CD4-positive, alpha-beta T cell (primary cell): ENCODE measurements at regions of chr6 and their contacts with region 1.

Region 1: DNA sequence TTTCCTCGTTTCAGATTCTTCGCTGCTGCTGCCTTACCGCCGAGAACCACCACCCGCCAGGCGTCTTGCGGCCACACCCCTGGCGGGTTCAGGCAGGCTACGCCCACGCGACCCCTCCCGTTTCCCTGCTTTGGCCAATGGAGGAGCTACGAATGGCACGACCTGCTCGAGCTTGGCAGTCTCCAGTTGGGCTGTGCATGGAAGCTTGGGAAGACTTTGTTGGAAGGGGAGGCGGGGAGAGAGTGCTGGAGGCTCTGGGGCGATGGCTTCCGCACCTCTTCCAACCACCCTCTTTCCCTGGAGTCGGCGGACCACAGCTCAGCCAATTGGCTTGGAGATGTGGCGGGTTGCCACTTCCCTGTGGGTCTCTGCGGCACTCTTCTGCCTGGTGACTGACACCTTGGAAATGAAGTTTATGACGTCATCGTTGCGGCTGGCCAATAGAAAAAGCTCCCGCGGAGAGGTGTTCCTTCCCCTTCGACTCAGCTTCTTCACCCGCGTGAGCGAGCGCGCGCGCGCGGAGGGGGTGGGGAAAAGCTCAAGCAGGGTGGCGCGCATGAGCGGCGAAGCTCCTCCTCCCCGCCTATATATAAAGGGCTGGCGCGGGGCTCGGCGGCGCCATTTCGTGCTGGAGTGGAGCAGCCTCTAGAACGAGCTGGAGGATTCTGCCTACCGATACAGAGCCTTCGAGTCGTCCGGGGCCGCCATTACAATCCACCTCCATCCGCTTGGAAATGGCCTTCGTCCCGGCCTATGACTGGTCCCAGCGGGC is 3.4 kb downstream of the BRD2 start:
- DNase-seq: peak; percentile 99 to 100 (median 100)
- ATAC-seq: peak; percentile 53
- H3K4me3 ChIP-seq: peak overlapping the region; percentile 97
- H3K4me3 Mint-ChIP-seq: peak overlapping the region; percentile 98
- H3K27ac ChIP-seq: peak overlapping the region; percentile 91 to 98
- H3K27ac Mint-ChIP-seq: peak overlapping the region; percentile 100
- H3K4me1 ChIP-seq: peaks cover 52% of the 10 kb centered on the region
- H3K4me1 Mint-ChIP-seq: peaks cover 48% of the 10 kb centered on the region
- H3K27me3 ChIP-seq: no peaks in the 10 kb centered on the region
- H3K27me3 Mint-ChIP-seq: no peaks in the 10 kb centered on the region
- CTCF ChIP-seq: no peak

Region 2: DNA sequence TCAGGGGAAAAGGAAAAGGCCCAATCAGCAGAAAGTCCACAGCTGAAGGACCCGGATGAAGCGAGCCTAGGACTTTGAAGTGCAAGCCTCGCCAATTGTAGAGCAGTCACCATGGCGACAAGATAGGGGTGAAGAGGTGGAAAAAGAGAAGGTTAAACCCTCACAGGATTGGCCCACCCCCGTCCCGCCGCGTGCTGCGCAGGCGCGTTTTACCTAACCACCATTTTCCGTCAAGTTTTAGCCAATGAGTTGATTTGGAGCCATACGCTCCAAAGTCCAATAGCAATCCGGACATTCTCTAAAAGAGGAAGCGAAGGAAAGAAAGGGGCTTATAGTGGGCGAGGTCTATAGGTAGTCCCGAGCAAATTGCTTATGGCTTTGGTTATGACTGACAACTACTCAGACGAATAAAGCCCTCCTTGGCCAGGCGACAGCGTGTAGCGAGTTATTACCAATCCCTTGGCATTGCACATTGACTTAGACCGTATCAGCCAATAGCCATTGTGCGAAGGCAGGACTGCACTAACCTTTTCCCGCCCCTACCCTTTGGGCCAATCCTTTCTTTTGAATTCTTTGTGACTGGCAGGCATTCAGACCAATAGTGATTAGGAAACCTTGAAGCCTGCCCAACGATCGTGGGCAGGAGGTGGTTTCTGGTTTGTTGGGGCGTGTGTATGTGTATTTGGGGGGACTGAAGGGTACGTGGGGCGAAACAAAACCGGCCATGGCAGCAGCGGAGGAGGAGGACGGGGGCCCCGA is 793.8 kb before region 1 on chr6 and contains the start of gene RNF5:
- CTCF ChIA-PET with region 1: no interaction called
- POLR2A ChIA-PET with region 1: interaction called, 17 read pairs
- intact Hi-C with region 1: no loop called
- DNase-seq: peak; percentile 83 to 99 (median 92)
- ATAC-seq: peak; percentile 81
- H3K4me3 ChIP-seq: peak within 1 kb of the TSS; percentile 91
- H3K4me3 Mint-ChIP-seq: peak within 1 kb of the TSS; percentile 91
- H3K27ac ChIP-seq: peak within 1 kb of the TSS; percentile 93 to 98
- H3K27ac Mint-ChIP-seq: peak within 1 kb of the TSS; percentile 85
- H3K4me1 ChIP-seq: peaks cover 79% of the 10 kb centered on the region
- H3K4me1 Mint-ChIP-seq: peaks cover 65% of the 10 kb centered on the region
- H3K27me3 ChIP-seq: no peaks in the 10 kb centered on the region
- H3K27me3 Mint-ChIP-seq: no peaks in the 10 kb centered on the region
- CTCF ChIP-seq: no peak
- total RNA-seq, gene RNF5: 9.6 to 9.9 TPM

Region 3: GRCh38 chr6:32853541-32854375 is 118.0 kb before region 1 on chr6 and contains the starts of genes PSMB9 and TAP1:
- CTCF ChIA-PET with region 1: interaction called, 11 read pairs
- POLR2A ChIA-PET with region 1: interaction called, 208 read pairs
- intact Hi-C with region 1: no loop called
- DNase-seq: peak; percentile 88 to 98 (median 94)
- ATAC-seq: peak; percentile 81
- H3K4me3 ChIP-seq: peak within 1 kb of the TSS; percentile 94
- H3K4me3 Mint-ChIP-seq: peak within 1 kb of the TSS; percentile 98
- H3K27ac ChIP-seq: peak within 1 kb of the TSS; percentile 98 to 100
- H3K27ac Mint-ChIP-seq: peak within 1 kb of the TSS; percentile 99
- H3K4me1 ChIP-seq: peaks cover 77% of the 10 kb centered on the region
- H3K4me1 Mint-ChIP-seq: peaks cover 86% of the 10 kb centered on the region
- H3K27me3 ChIP-seq: no peaks in the 10 kb centered on the region
- H3K27me3 Mint-ChIP-seq: no peaks in the 10 kb centered on the region
- CTCF ChIP-seq: peak; percentile 97
- total RNA-seq, gene PSMB9: 37.2 to 38.4 TPM
- total RNA-seq, gene TAP1: 91.5 to 93.9 TPM

Region 4: GRCh38 chr6:32940656-32941213 is 31.0 kb before region 1 on chr6 and contains the start of gene HLA-DMB:
- CTCF ChIA-PET with region 1: interaction called, 12 read pairs
- POLR2A ChIA-PET with region 1: interaction called, 325 read pairs
- intact Hi-C with region 1: no loop called
- DNase-seq: peak in 10 of 14 experiments; percentile 15 to 89 (median 42)
- ATAC-seq: peak; percentile 85
- H3K4me3 ChIP-seq: peak within 1 kb of the TSS; percentile 72
- H3K4me3 Mint-ChIP-seq: peak within 1 kb of the TSS; percentile 96
- H3K27ac ChIP-seq: peak within 1 kb of the TSS; percentile 86 to 89
- H3K27ac Mint-ChIP-seq: peak within 1 kb of the TSS; percentile 99
- H3K4me1 ChIP-seq: peaks cover 58% of the 10 kb centered on the region
- H3K4me1 Mint-ChIP-seq: peaks cover 60% of the 10 kb centered on the region
- H3K27me3 ChIP-seq: no peaks in the 10 kb centered on the region
- H3K27me3 Mint-ChIP-seq: no peaks in the 10 kb centered on the region
- CTCF ChIP-seq: no peak
- total RNA-seq, gene HLA-DMB: 4.6 to 6.0 TPM

Region 5: DNA sequence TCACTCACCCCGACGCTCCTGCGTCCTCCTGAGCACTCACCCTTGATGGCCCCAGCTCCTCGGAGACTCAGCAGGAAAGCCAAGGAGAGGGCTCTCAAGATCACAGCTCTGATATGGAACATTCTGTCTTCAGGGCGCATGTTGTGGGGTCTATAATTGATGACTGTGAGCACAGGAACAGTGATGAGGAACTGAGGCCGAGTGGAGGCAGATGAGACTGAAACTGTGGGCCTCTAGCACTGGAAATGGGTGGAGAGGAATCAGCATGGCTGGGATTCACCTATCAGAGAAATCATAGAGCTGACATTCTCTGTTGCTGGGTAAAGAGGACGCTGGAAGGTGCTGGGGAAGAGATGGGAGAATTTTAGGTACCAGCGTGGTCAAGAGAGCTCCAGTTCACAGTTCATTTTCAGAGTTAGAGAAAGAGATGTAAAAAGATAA is 101.7 kb after region 1 on chr6 and contains the start of gene HLA-DPA1:
- CTCF ChIA-PET with region 1: no interaction called
- POLR2A ChIA-PET with region 1: interaction called, 12 read pairs
- intact Hi-C with region 1: no loop called
- DNase-seq: peak in 7 of 14 experiments; percentile 10 to 79 (median 48)
- ATAC-seq: peak; percentile 73
- H3K4me3 ChIP-seq: peak within 1 kb of the TSS; percentile 61
- H3K4me3 Mint-ChIP-seq: peak within 1 kb of the TSS; percentile 90
- H3K27ac ChIP-seq: no peak within 1 kb of the TSS
- H3K27ac Mint-ChIP-seq: peak within 1 kb of the TSS; percentile 71
- H3K4me1 ChIP-seq: peaks cover 39% of the 10 kb centered on the region
- H3K4me1 Mint-ChIP-seq: peaks cover 53% of the 10 kb centered on the region
- H3K27me3 ChIP-seq: no peaks in the 10 kb centered on the region
- H3K27me3 Mint-ChIP-seq: peaks cover 4% of the 10 kb centered on the region
- CTCF ChIP-seq: no peak
- total RNA-seq, gene HLA-DPA1: 19.4 to 19.9 TPM

Region 6: GRCh38 chr6:33299237-33299944 is 327.6 kb after region 1 on chr6:
- CTCF ChIA-PET with region 1: no interaction called
- POLR2A ChIA-PET with region 1: interaction called, 11 read pairs
- intact Hi-C with region 1: no loop called
- DNase-seq: peak; percentile 89 to 97 (median 92)
- ATAC-seq: peak; percentile 84
- H3K4me3 ChIP-seq: peak overlapping the region; percentile 91
- H3K4me3 Mint-ChIP-seq: peak overlapping the region; percentile 98
- H3K27ac ChIP-seq: peak overlapping the region; percentile 90 to 96
- H3K27ac Mint-ChIP-seq: peak overlapping the region; percentile 99
- H3K4me1 ChIP-seq: peaks cover 34% of the 10 kb centered on the region
- H3K4me1 Mint-ChIP-seq: peaks cover 32% of the 10 kb centered on the region
- H3K27me3 ChIP-seq: no peaks in the 10 kb centered on the region
- H3K27me3 Mint-ChIP-seq: no peaks in the 10 kb centered on the region
- CTCF ChIP-seq: peak; percentile 74

Region 7: GRCh38 chr6:34236131-34236996 is 1264.6 kb after region 1 on chr6 and contains the start of gene HMGA1:
- CTCF ChIA-PET with region 1: no interaction called
- POLR2A ChIA-PET with region 1: interaction called, 5 read pairs
- intact Hi-C with region 1: loop called in 1 of 2 experiments (anchors 5 kb)
- DNase-seq: peak; percentile 84 to 96 (median 89)
- ATAC-seq: peak; percentile 71
- H3K4me3 ChIP-seq: peak within 1 kb of the TSS; percentile 90
- H3K4me3 Mint-ChIP-seq: peak within 1 kb of the TSS; percentile 97
- H3K27ac ChIP-seq: peak within 1 kb of the TSS; percentile 97 to 99
- H3K27ac Mint-ChIP-seq: peak within 1 kb of the TSS; percentile 99
- H3K4me1 ChIP-seq: peaks cover 39% of the 10 kb centered on the region
- H3K4me1 Mint-ChIP-seq: peaks cover 35% of the 10 kb centered on the region
- H3K27me3 ChIP-seq: no peaks in the 10 kb centered on the region
- H3K27me3 Mint-ChIP-seq: no peaks in the 10 kb centered on the region
- CTCF ChIP-seq: no peak
- total RNA-seq, gene HMGA1: 102 to 107 TPM